ENCODE measurements at regions of chr11 and their contacts with region 1.

Region 1: GRCh38 chr11:102268329-102269193 is 48.7 kb upstream of the BIRC3 start:
- DNase-seq: peak; percentile 76 to 91
- ATAC-seq: peak; percentile 91 to 93
- H3K4me3 ChIP-seq: peak overlapping the region; percentile 54 to 70 (median 60)
- H3K27ac ChIP-seq: peak overlapping the region; percentile 22 to 71 (median 52)
- H3K4me1 ChIP-seq: peaks cover 7 to 8% of the 10 kb centered on the region in 2 donors
- H3K27me3 ChIP-seq: no peaks in the 10 kb centered on the region
- CTCF ChIP-seq: peak; percentile 45 to 84 (median 56)
- POLR2A ChIP-seq: no peak

Region 2: GRCh38 chr11:101860696-101861427 is 407.7 kb before region 1 on chr11:
- in situ Hi-C with region 1: loop called in 1 of 4 experiments (anchors 25 kb)
- intact Hi-C with region 1: no loop called
- DNase-seq: peak in 1 of 2 donors; percentile 18
- ATAC-seq: peak in 1 of 2 donors; percentile 80
- H3K4me3 ChIP-seq: no peak overlapping the region
- H3K27ac ChIP-seq: no peak overlapping the region
- H3K4me1 ChIP-seq: no peaks in the 10 kb centered on the region
- H3K27me3 ChIP-seq: no peaks in the 10 kb centered on the region
- CTCF ChIP-seq: peak; percentile 36 to 73 (median 45)
- POLR2A ChIP-seq: no peak

Region 3: DNA sequence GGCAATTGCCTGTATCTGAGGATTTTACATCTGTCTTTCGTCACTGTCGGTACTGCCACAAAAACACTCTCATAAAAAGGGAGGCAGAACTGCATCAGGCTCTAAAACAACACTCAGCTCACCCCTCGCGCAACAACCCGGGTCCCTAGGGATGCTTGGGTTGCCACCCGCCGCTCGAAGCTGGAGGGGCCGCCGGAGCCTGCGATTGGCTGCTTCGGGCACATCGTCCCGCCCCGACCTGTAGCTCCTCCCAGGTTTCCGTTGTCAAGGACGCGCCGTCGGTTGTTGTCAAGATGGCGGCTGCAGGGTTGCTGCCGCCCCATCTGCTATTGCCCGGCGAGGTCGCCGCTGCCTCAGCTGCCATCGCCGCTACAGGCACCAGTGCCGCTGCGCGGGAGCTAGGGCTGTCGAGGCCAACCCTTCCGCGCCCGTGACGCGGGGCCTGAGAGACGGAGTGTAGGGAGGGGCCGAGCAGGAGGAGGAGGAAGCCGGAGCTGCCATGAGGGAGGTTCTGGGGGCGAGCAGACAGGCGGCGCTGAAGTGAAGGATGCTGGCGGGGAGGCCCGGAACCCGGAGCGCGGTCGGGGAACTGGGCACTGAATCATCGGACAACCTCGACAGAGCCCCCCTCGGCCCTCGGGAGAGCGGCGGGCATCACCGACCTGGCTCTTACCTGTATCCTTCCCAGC is 353.7 kb before region 1 on chr11 and contains the start of gene CEP126:
- in situ Hi-C with region 1: no loop called
- intact Hi-C with region 1: loop called (anchors 5 kb)
- DNase-seq: peak; percentile 87
- ATAC-seq: peak; percentile 96 to 98
- H3K4me3 ChIP-seq: peak within 1 kb of the TSS; percentile 73 to 98 (median 79)
- H3K27ac ChIP-seq: peak within 1 kb of the TSS; percentile 59 to 78 (median 66)
- H3K4me1 ChIP-seq: peaks cover 0 to 10% of the 10 kb centered on the region in 2 donors
- H3K27me3 ChIP-seq: no peaks in the 10 kb centered on the region
- CTCF ChIP-seq: peak in 3 of 5 experiments; percentile 34 to 54 (median 44)
- POLR2A ChIP-seq: peak in 1 of 2 donors; percentile 25
- total RNA-seq, gene CEP126: 0.42 to 0.63 (median 0.55) TPM

Region 4: GRCh38 chr11:102007567-102008437 is 260.8 kb before region 1 on chr11:
- in situ Hi-C with region 1: no loop called
- intact Hi-C with region 1: loop called (anchors 2 kb)
- DNase-seq: no peak
- ATAC-seq: peak; percentile 59 to 82
- H3K4me3 ChIP-seq: no peak overlapping the region
- H3K27ac ChIP-seq: peak overlapping the region in 1 of 4 donors; percentile 23
- H3K4me1 ChIP-seq: peaks cover 3 to 4% of the 10 kb centered on the region in 2 donors
- H3K27me3 ChIP-seq: no peaks in the 10 kb centered on the region
- CTCF ChIP-seq: peak; percentile 29 to 61 (median 54)
- POLR2A ChIP-seq: no peak

Region 5: GRCh38 chr11:102047305-102047924 is 221.1 kb before region 1 on chr11 and contains the start of gene CFAP300:
- in situ Hi-C with region 1: loop called in 2 of 4 experiments (anchors 25 kb)
- intact Hi-C with region 1: loop called (anchors 5 kb)
- DNase-seq: peak; percentile 58 to 70
- ATAC-seq: peak; percentile 68 to 79
- H3K4me3 ChIP-seq: peak within 1 kb of the TSS; percentile 61 to 87 (median 63)
- H3K27ac ChIP-seq: peak within 1 kb of the TSS; percentile 31 to 56 (median 37)
- H3K4me1 ChIP-seq: peaks cover 0 to 8% of the 10 kb centered on the region in 2 donors
- H3K27me3 ChIP-seq: peaks cover 7 to 14% (median 12%) of the 10 kb centered on the region in 3 donors
- CTCF ChIP-seq: no peak
- POLR2A ChIP-seq: no peak
- total RNA-seq, gene CFAP300: 0.22 TPM in 1 of 4 donors, not detected in the others

Region 6: DNA sequence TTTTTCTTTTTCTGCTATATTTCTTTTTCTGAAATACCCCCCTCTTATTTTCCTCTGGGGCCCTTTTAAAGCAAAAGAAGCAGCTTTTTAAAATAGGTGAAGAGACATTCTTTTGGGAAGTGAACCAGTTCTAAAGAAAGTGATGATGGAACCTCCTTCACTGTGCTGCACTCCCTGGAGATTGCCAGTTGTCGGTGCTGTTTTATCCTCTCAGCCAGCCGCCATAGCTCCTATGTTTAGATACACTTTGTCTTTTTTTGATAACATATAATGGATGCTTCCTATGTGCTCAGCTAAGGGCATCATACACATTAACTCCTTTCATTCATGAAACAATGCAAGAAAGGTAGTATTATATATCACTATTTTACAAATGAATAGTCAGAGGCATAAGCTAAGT is 207.3 kb before region 1 on chr11:
- in situ Hi-C with region 1: loop called in 2 of 4 experiments (anchors 25 kb)
- intact Hi-C with region 1: no loop called
- DNase-seq: no peak
- ATAC-seq: peak in 1 of 2 donors; percentile 66
- H3K4me3 ChIP-seq: no peak overlapping the region
- H3K27ac ChIP-seq: no peak overlapping the region
- H3K4me1 ChIP-seq: no peaks in the 10 kb centered on the region
- H3K27me3 ChIP-seq: no peaks in the 10 kb centered on the region
- CTCF ChIP-seq: no peak
- POLR2A ChIP-seq: no peak

Region 7: GRCh38 chr11:102109896-102110760 is 158.4 kb before region 1 on chr11 and contains the start of gene YAP1:
- in situ Hi-C with region 1: no loop called
- intact Hi-C with region 1: loop called (anchors 1 kb)
- DNase-seq: peak; percentile 78 to 91
- ATAC-seq: peak; percentile 75 to 79
- H3K4me3 ChIP-seq: peak within 1 kb of the TSS; percentile 79 to 96 (median 82)
- H3K27ac ChIP-seq: peak within 1 kb of the TSS; percentile 93 to 99 (median 98)
- H3K4me1 ChIP-seq: peaks cover 25 to 35% of the 10 kb centered on the region in 2 donors
- H3K27me3 ChIP-seq: no peaks in the 10 kb centered on the region
- CTCF ChIP-seq: peak in 2 of 5 experiments; percentile 5 to 13
- POLR2A ChIP-seq: peak; percentile 60 to 75
- total RNA-seq, gene YAP1: 41.9 to 89.4 (median 72.6) TPM